OCI-LY7 (cell line): ENCODE measurements at regions of chr2 and their contacts with region 1.

Region 1: GRCh38 chr2:193963472-193964119 is 1693.4 kb upstream of the SLC39A10 start:
- DNase-seq: peak; percentile 13
- H3K4me3 ChIP-seq: no peak overlapping the region
- H3K27ac ChIP-seq: no peak overlapping the region
- H3K4me1 ChIP-seq: no peaks in the 10 kb centered on the region
- CTCF ChIP-seq: peak; percentile 77

Region 2: DNA sequence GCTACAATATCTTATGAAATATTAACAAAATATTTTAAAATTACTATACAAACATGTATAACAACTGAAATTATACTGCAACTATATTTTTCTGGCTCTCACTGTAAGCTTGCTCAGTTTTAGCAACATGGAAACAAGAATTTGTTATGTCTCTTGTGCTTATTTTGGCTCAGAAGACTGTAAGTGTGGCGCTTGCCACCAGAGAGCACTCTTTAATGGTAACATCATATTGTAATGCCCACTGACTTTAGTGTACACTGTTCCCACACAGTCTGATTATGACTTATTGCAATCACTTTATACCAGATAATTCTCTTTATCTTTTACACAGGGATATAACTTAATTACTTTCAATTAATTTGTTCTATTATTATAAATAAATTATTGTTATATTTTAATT is 268.2 kb before region 1 on chr2:
- CTCF ChIA-PET with region 1: no interaction called
- POLR2A ChIA-PET with region 1: no interaction called
- intact Hi-C with region 1: loop called (anchors 10 kb)
- DNase-seq: peak; percentile 10
- H3K4me3 ChIP-seq: no peak overlapping the region
- H3K27ac ChIP-seq: no peak overlapping the region
- H3K4me1 ChIP-seq: no peaks in the 10 kb centered on the region
- CTCF ChIP-seq: peak; percentile 72